MCF 10A (cell line): ENCODE measurements at regions of chr17 and their contacts with region 1.

Region 1: GRCh38 chr17:32319548-32319905 is 22.4 kb downstream of the C17orf75 start:
- DNase-seq: peak; percentile 71
- H3K4me3 Mint-ChIP-seq: no peak overlapping the region
- H3K27ac Mint-ChIP-seq: no peak overlapping the region
- H3K4me1 Mint-ChIP-seq: no peaks in the 10 kb centered on the region
- H3K27me3 Mint-ChIP-seq: peaks cover 18% of the 10 kb centered on the region
- CTCF ChIP-seq: peak; percentile 97

Region 2: DNA sequence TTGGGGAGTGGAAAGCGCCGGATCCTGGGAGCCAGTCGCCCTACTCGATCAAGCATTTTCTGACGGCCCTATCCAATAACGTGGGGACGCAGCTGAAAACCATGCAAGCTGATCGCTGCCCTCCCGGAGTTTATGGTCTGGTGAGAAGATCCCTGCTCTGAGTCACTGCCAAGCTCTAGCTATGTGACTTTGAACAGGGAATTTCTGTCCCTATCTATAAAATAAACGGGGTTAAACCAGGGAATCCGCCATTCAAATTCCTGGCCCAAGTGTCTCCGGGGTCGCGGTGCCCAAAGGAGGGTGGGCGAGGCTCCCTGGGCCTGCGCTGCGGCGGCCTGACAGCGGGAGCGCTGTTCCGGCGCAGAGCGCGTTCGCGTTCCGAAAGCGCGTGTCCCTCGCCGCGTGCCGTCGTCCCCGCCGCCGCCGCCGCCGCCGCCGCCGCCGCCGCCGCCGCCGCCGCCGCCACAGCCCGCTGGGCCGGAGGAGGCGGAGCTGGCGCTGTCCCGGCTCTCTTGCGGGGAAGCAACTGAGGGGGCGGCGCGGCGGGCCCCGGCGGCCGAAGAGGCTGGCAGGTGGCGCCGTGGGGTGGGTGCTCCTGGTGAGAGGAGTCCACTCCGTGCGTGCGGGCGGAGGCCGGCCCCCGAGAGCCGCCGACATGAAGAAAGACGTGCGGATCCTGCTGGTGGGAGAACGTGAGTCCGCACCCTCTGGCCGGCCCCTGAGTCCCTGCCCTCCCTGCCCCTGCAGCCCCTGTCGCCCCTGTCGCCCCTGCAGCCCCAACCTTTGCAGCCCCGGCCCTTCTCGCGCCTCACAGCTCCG is 177.3 kb before region 1 on chr17 and contains the start of gene RHOT1:
- CTCF ChIA-PET with region 1: interaction called, 5 read pairs
- POLR2A ChIA-PET with region 1: no interaction called
- intact Hi-C with region 1: loop called (anchors 2 kb)
- DNase-seq: peak; percentile 86
- H3K4me3 Mint-ChIP-seq: peak within 1 kb of the TSS; percentile 96
- H3K27ac Mint-ChIP-seq: peak within 1 kb of the TSS; percentile 87
- H3K4me1 Mint-ChIP-seq: peaks cover 13% of the 10 kb centered on the region
- H3K27me3 Mint-ChIP-seq: no peaks in the 10 kb centered on the region
- CTCF ChIP-seq: peak; percentile 47
- total RNA-seq, gene RHOT1: 19.8 and 21.9 TPM in 2 replicates

Region 3: GRCh38 chr17:32253117-32253611 is 66.4 kb before region 1 on chr17:
- CTCF ChIA-PET with region 1: interaction called, 18 read pairs
- POLR2A ChIA-PET with region 1: no interaction called
- intact Hi-C with region 1: loop called (anchors 1 kb)
- DNase-seq: peak; percentile 82
- H3K4me3 Mint-ChIP-seq: no peak overlapping the region
- H3K27ac Mint-ChIP-seq: no peak overlapping the region
- H3K4me1 Mint-ChIP-seq: no peaks in the 10 kb centered on the region
- H3K27me3 Mint-ChIP-seq: no peaks in the 10 kb centered on the region
- CTCF ChIP-seq: peak; percentile 92

Region 4: GRCh38 chr17:32331243-32332040 is 11.9 kb after region 1 on chr17:
- CTCF ChIA-PET with region 1: interaction called, 19 read pairs
- POLR2A ChIA-PET with region 1: no interaction called
- intact Hi-C with region 1: no loop called
- DNase-seq: no peak
- H3K4me3 Mint-ChIP-seq: no peak overlapping the region
- H3K27ac Mint-ChIP-seq: no peak overlapping the region
- H3K4me1 Mint-ChIP-seq: peaks cover 5% of the 10 kb centered on the region
- H3K27me3 Mint-ChIP-seq: no peaks in the 10 kb centered on the region
- CTCF ChIP-seq: no peak